Left cardiac atrium (tissue), 4 donors: ENCODE measurements at regions of chr12 and their contacts with region 1.

Region 1: DNA sequence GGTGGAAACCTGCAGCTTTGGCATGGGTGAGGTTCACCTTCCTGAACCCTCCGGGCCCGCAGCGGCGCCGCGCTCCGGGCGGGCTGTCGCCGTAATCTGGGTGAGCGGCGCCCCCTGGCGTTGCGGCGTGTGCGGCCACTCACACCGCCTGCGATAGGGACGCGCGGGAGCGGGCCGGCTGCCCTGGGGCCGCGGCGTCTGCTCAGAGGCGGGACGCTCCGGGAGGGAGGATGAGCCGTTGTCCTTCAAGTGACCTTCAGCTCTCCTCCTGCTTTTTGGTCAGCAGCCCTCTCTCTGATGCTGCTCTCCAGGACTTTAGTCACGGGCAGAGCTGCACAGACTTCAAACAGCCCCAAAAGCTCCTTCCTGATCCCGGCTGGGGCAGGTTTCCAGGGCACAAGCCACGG is 211.7 kb upstream of the FKBP4 start:
- DNase-seq: peak; percentile 76
- ATAC-seq: peak; percentile 92 to 96

Region 2: DNA sequence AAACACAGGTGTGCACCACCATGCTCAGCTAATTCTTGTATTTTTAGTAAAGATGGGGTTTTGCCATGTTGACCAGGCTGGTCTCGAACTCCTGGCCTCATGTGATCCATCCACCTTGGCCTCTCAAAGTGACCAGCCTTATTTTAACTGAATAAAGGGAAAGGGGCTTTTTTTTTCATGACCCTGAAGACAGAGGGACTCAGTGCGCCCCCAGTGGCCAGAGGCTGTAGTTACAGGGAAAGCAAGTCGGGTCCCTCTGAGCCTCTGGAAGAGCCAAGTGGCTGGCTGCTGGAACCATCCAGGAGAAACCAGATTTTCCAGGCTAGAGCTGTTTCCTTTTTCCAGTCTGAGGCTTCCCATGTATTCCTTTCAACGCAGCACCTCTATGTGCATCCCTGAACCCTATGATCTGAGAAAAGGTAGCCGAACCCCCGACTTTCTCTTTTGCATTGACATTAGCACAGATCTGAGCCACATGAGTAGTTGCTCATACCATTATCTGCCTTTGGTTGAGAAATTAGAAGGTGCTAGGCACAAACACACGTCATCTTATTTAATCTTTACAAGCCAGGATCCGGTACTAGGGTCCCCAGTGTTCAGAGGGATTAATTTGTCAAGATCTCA is 187.6 kb before region 1 on chr12:
- intact Hi-C with region 1: loop called in 1 of 2 experiments (anchors 10 kb)
- DNase-seq: peak; percentile 45
- ATAC-seq: peak in 1 of 2 donors; percentile 25

Region 3: DNA sequence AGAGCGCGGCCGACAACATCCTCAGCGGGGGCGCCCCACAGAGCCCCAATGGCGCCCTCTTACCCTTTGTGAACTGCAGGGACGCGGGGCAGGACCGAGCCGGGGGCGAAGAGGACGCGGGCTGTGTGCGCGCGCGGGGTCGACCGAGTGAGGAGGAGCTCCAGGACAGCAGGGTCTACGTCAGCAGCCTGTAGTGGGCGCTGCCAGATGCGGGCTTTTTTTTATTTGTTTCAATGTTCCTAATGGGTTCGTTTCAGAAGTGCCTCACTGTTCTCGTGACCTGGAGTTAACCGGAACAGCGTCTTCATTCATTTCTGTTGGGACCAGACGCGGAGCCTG is 107.9 kb after region 1 on chr12:
- intact Hi-C with region 1: no loop called
- DNase-seq: no peak
- ATAC-seq: peak; percentile 52 to 53